ENCODE measurements at regions of chr20 and their contacts with region 1.

Region 1: GRCh38 chr20:46572153-46572552 is 21.7 kb upstream of the OCSTAMP start:
- DNase-seq: no peak
- H3K4me3 ChIP-seq: no peak overlapping the region
- H3K27ac ChIP-seq: peak overlapping the region in 1 of 4 donors; percentile 22
- H3K4me1 ChIP-seq: peaks cover 10 to 25% (median 18%) of the 10 kb centered on the region in 4 donors
- H3K27me3 ChIP-seq: no peaks in the 10 kb centered on the region
- CTCF ChIP-seq: no peak
- EP300 ChIP-seq: no peak
- POLR2A ChIP-seq: no peak

Region 2: DNA sequence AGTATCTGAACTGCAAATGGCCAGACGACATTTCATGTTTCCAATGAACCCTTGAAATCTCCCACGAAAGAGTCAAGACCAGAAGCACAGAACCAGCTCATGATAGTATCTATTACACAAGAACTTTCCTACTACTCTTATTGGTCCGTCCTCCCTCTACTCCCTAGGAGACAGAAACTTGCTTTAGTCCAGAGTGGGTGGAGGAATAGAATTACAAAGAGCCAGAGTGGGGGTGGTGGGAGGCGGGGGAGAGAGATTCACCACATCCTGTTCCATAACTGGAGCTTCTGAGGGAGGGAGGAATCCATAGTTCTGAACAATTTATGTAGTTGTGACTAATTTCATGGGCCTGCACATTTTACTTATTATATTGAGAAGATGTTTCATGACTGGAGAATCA is 961.1 kb before region 1 on chr20:
- intact Hi-C with region 1: no loop called
- DNase-seq: peak; percentile 74
- H3K4me3 ChIP-seq: no peak overlapping the region
- H3K27ac ChIP-seq: no peak overlapping the region
- H3K4me1 ChIP-seq: no peaks in the 10 kb centered on the region
- H3K27me3 ChIP-seq: peaks cover 0 to 10% (median 0%) of the 10 kb centered on the region in 4 donors
- CTCF ChIP-seq: no peak
- EP300 ChIP-seq: no peak
- POLR2A ChIP-seq: no peak

Region 3: DNA sequence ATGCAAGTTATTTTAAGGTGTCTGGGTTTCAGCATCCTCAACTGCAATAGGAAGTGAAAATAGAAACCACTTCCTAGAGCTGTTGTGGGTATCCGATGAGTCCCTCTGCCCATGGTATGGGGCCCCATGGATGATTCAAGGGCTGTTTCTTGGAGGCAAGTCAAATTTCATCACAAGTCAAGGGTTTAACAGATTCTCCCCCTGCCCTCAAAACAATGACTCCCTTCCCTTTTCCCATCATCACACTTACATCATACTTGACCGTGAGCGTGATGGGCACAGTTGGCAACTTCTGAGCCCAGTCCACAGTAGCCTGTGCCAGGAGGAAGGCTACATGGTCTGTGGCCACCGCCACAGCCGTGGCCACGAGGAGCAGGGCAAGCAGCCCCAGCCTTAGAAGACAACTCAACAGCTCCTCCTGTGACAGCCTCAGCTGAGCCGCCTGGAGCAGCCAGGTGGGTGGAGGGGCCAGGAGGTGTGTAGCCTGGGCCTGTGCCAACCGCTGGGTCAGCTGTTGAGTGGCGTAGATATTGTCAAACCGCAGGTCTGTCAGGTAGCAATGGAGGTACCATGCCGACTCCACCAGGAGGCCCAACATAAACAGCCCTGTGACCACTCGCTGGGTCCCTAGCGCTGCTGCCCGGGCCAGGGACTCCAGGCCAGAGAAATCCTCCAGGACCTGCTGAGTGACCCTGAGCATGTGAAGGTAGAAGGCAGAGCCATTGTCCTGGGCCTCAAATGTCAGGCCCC is 26.9 kb before region 1 on chr20:
- intact Hi-C with region 1: no loop called
- DNase-seq: no peak
- H3K4me3 ChIP-seq: no peak overlapping the region
- H3K27ac ChIP-seq: no peak overlapping the region
- H3K4me1 ChIP-seq: no peaks in the 10 kb centered on the region
- H3K27me3 ChIP-seq: peaks cover 0 to 44% (median 0%) of the 10 kb centered on the region in 4 donors
- CTCF ChIP-seq: no peak
- EP300 ChIP-seq: no peak
- POLR2A ChIP-seq: no peak

Region 4: DNA sequence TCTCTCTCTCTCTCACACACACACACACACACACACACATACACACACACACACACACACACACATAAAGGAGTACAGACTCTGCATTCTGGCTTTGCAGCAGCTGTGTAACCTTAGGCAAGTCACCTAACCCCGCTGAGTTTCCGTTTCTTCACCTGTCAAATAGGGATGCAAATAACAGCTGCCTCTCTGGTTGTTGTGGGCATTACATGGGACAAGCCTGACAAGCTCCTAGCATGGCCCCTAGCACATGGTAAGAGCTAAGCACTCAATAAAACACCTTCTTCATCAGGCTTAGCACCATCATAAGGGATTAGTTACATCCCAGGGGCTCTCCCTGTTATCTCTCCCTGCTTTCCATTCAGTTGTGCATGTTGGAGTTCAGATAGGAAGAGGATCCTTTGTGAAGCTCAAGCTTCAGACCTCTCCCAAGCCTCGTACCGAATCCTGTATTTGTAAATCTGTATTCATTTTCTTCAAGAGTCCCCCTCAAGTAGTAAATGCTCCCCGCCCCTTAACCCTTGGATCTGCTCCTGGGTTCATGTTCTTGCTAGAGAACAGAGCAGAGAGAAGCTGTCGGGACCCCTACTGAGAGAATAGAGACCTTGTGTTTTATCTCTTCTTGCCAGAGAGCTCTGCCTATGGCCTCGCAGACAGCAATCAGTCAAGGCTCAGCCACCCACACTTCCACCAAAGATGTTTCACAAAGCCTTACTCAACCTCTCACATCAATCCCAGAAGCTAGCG is 76.9 kb after region 1 on chr20:
- intact Hi-C with region 1: no loop called
- DNase-seq: no peak
- H3K4me3 ChIP-seq: no peak overlapping the region
- H3K27ac ChIP-seq: no peak overlapping the region
- H3K4me1 ChIP-seq: peaks cover 0 to 10% (median 7%) of the 10 kb centered on the region in 4 donors
- H3K27me3 ChIP-seq: peaks cover 0 to 27% (median 1%) of the 10 kb centered on the region in 4 donors
- CTCF ChIP-seq: no peak
- EP300 ChIP-seq: no peak
- POLR2A ChIP-seq: no peak

Region 5: GRCh38 chr20:46681032-46681854 is 109.1 kb after region 1 on chr20:
- intact Hi-C with region 1: loop called (anchors 5 kb)
- DNase-seq: no peak
- H3K4me3 ChIP-seq: no peak overlapping the region
- H3K27ac ChIP-seq: no peak overlapping the region
- H3K4me1 ChIP-seq: peaks cover 13 to 48% (median 40%) of the 10 kb centered on the region in 4 donors
- H3K27me3 ChIP-seq: no peaks in the 10 kb centered on the region
- CTCF ChIP-seq: peak; percentile 71 to 81 (median 72)
- EP300 ChIP-seq: no peak
- POLR2A ChIP-seq: no peak

Measured in esophagus muscularis mucosa (tissue), 4 donors.